GM10248 (cell line): ENCODE measurements at regions of chr12 and their contacts with region 1.

Region 1: DNA sequence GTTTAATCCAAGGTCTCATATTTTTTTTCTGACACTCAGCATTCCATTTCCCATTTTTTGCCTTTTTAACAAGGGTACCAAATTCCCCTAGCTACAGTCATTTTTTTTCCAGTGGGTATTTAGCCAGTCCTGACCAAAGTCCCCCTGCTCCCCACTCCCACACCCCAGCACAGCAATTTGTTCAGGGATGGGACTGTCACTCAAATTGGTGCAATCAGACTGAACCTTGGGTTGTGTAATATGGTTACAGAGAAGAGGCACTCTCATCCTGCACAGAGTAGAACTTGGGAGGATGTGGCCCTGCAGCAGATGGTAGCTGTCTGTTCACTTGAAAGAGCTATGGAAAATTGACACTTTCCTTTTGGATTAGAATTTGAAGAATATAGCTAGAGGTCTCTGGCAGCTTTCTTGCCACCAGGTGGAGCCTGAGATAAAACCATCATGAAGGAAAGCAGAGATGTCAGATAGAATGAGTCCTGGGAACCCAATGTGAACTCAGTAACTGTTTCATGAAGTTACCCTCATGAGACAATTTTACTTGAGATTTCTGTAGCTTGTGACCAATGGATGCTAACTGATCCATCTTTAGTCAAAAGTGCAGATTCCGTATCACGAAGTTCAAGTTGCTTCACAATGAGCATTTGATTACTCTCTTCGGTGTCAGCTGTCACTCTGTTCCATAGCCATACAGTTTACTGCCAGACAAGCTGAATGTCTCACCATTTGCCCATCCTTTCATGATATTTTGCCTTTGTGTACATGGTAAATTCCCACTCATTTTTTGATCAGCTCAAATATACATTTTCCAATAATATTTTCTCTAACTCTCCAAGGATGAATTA is 394.0 kb upstream of the SYT1 start:
- DNase-seq: no peak
- CTCF ChIP-seq: peak; percentile 4

Region 2: DNA sequence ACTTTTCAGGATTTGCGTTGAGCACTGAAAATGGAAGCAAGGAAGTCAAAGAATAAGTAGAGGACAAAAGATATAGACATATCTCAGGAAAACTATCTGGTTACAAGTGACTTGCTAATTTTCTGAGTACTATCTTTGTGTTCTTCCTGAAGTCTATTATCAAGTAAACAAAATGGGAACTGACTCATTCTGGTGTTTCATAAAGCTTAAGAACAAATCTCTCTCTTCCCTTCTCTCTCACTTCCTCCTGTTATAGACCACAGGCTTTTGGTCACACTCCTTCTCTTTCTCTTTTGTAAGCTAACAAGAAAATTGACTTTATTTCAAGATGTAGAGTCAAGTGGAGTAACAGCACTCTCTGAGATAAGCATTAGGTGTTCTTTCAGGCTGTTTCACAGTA is 12.6 kb before region 1 on chr12:
- CTCF ChIA-PET with region 1: interaction called, 21 read pairs
- POLR2A ChIA-PET with region 1: no interaction called
- DNase-seq: peak; percentile 19
- CTCF ChIP-seq: no peak

Region 3: DNA sequence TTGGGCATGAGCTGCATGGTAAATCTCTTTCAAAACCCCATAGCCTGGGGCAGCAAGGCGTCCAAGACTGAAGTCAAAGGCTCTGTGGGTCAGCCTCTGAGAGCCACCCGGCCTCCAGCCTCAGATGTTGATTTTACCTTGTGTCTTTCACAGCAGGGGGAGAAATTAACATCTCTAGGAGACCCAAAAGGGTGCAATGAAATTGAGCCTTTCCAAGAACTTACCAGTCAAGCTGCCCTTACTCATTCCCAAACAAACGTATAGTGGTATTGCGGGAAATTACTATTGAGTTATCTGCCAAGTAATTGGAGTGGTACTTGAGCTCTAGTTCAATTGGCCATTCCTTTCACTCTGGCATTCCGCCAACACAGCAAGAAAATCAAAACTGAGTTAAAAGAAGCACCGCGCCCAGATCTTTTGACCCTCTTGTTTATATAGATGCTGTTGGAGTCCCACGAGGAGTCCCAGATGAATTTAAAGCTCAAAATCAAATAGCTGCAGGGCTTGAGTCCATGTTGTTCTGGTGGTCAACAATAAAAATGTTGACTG is 13.3 kb after region 1 on chr12:
- CTCF ChIA-PET with region 1: interaction called, 16 read pairs
- POLR2A ChIA-PET with region 1: no interaction called
- DNase-seq: no peak
- CTCF ChIP-seq: no peak